Activated CD4-positive, alpha-beta memory T cell treated with anti-CD3 and anti-CD28 coated beads for 36 hours (primary cell): ENCODE measurements at regions of chr11 and their contacts with region 1.

Region 1: GRCh38 chr11:88357323-88358039 is 19.9 kb upstream of the CTSC start:
- DNase-seq: no peak
- H3K4me3 Mint-ChIP-seq: peak overlapping the region; percentile 14
- H3K27ac Mint-ChIP-seq: peak overlapping the region; percentile 67
- H3K4me1 Mint-ChIP-seq: peaks cover 46% of the 10 kb centered on the region
- H3K27me3 Mint-ChIP-seq: no peaks in the 10 kb centered on the region

Region 2: DNA sequence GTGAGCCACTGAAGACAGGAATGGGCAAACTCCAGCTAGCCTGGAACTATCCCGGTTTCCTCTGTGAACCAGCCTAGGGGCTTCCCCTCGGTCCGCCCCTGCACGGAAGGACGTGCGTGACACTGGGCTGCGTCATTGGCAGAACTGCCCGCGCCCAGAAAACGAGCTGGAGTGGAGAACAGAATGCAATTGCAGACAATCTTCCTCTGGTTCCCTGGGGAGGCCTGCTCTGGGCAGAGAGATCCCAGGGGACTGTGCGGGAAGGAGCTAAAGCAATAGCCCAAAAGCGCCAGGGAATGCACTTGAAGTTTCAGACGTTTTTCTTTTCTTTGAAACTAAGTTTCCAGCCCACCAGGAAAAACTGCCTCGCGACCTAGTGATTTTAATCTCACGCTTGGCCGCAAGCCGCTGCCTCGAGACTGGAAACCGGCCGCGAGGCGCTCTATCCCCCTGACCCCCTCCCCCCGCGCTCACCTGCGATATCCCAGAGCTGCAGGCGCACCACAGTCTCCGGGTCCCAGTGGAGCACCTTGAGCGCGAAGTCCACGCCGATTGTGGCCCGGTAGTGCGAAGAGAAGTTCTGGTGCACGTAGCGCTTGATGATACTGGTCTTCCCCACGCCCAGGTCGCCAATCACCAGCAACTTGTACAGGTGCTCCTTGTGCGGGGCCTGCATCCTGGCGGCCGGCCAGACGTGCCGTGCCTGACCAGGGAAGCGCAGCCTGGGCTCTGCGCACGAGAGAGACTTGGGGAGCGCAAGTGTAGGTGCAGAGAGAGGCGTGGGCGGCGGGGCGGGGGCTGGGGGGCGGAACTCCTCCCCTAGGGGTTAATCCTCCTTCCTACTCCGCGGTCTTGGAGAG is 182.5 kb before region 1 on chr11 and contains the start of gene RAB38:
- CTCF ChIA-PET with region 1: no interaction called
- POLR2A ChIA-PET with region 1: no interaction called
- intact Hi-C with region 1: loop called (anchors 1 kb)
- DNase-seq: peak; percentile 74
- H3K4me3 Mint-ChIP-seq: peak within 1 kb of the TSS; percentile 70
- H3K27ac Mint-ChIP-seq: no peak within 1 kb of the TSS
- H3K4me1 Mint-ChIP-seq: peaks cover 37% of the 10 kb centered on the region
- H3K27me3 Mint-ChIP-seq: peaks cover 20% of the 10 kb centered on the region
- total RNA-seq, gene RAB38: 0.76 to 0.97 TPM

Region 3: GRCh38 chr11:88345408-88345807 is 12.1 kb before region 1 on chr11:
- CTCF ChIA-PET with region 1: interaction called, 3 read pairs
- POLR2A ChIA-PET with region 1: interaction called, 3 read pairs
- intact Hi-C with region 1: loop called (anchors 1 kb)
- DNase-seq: no peak
- H3K4me3 Mint-ChIP-seq: no peak overlapping the region
- H3K27ac Mint-ChIP-seq: no peak overlapping the region
- H3K4me1 Mint-ChIP-seq: peaks cover 4% of the 10 kb centered on the region
- H3K27me3 Mint-ChIP-seq: no peaks in the 10 kb centered on the region

Region 4: GRCh38 chr11:88384673-88385005 is 27.2 kb after region 1 on chr11:
- CTCF ChIA-PET with region 1: no interaction called
- POLR2A ChIA-PET with region 1: no interaction called
- intact Hi-C with region 1: no loop called
- DNase-seq: no peak
- H3K4me3 Mint-ChIP-seq: no peak overlapping the region
- H3K27ac Mint-ChIP-seq: no peak overlapping the region
- H3K4me1 Mint-ChIP-seq: peaks cover 5% of the 10 kb centered on the region
- H3K27me3 Mint-ChIP-seq: no peaks in the 10 kb centered on the region

Region 5: GRCh38 chr11:88421530-88421929 is 64.0 kb after region 1 on chr11:
- CTCF ChIA-PET with region 1: interaction called, 3 read pairs
- POLR2A ChIA-PET with region 1: interaction called, 3 read pairs
- intact Hi-C with region 1: loop called (anchors 1 kb)
- DNase-seq: peak; percentile 70
- H3K4me3 Mint-ChIP-seq: no peak overlapping the region
- H3K27ac Mint-ChIP-seq: peak overlapping the region; percentile 70
- H3K4me1 Mint-ChIP-seq: peaks cover 42% of the 10 kb centered on the region
- H3K27me3 Mint-ChIP-seq: no peaks in the 10 kb centered on the region

Region 6: DNA sequence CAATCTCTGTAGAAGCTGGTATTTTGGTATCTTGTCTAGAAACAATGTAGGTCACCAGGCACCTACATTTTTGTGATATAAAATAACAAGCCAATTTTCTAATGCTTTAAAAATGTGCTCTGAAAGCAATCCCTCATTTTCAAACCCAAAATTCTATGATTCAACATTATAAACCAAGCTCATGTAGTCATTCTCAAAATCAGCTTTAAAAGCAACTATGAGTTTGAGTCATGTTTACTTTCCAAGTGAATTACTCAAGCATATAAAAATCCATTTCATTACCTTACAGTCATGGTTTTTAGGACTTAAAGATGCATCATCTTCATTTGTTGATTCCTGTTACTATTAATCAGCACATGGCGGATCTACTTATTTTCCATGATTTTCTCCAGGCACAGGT is 491.9 kb after region 1 on chr11:
- CTCF ChIA-PET with region 1: no interaction called
- POLR2A ChIA-PET with region 1: no interaction called
- intact Hi-C with region 1: loop called (anchors 10 kb)
- DNase-seq: no peak
- H3K4me3 Mint-ChIP-seq: no peak overlapping the region
- H3K27ac Mint-ChIP-seq: no peak overlapping the region
- H3K4me1 Mint-ChIP-seq: peaks cover 15% of the 10 kb centered on the region
- H3K27me3 Mint-ChIP-seq: no peaks in the 10 kb centered on the region